CD4-positive, alpha-beta memory T cell (primary cell): ENCODE measurements at regions of chr9 and their contacts with region 1.

Region 1: GRCh38 chr9:72526901-72527800 is 5.7 kb downstream of the TMC1 start:
- DNase-seq: peak; percentile 74 to 93 (median 79)
- H3K4me3 ChIP-seq: peak overlapping the region; percentile 54 to 76
- H3K4me3 Mint-ChIP-seq: peak overlapping the region; percentile 81 to 94 (median 86)
- H3K27ac ChIP-seq: peak overlapping the region; percentile 68
- H3K27ac Mint-ChIP-seq: peak overlapping the region; percentile 92 to 98 (median 96)
- H3K4me1 ChIP-seq: peaks cover 27% of the 10 kb centered on the region
- H3K4me1 Mint-ChIP-seq: peaks cover 22 to 46% (median 34%) of the 10 kb centered on the region in 4 donors
- H3K27me3 ChIP-seq: no peaks in the 10 kb centered on the region
- H3K27me3 Mint-ChIP-seq: no peaks in the 10 kb centered on the region

Region 2: GRCh38 chr9:71911253-71912074 is 615.7 kb before region 1 on chr9 and contains the start of gene C9orf85:
- CTCF ChIA-PET with region 1: no interaction called
- POLR2A ChIA-PET with region 1: no interaction called
- intact Hi-C with region 1: loop called (anchors 10 kb)
- DNase-seq: peak; percentile 94 to 98 (median 96)
- H3K4me3 ChIP-seq: peak within 1 kb of the TSS; percentile 77 to 83
- H3K4me3 Mint-ChIP-seq: peak within 1 kb of the TSS; percentile 99 to 100 (median 100)
- H3K27ac ChIP-seq: peak within 1 kb of the TSS; percentile 74
- H3K27ac Mint-ChIP-seq: peak within 1 kb of the TSS; percentile 92 to 100 (median 97)
- H3K4me1 ChIP-seq: peaks cover 51% of the 10 kb centered on the region
- H3K4me1 Mint-ChIP-seq: peaks cover 46 to 76% (median 54%) of the 10 kb centered on the region in 4 donors
- H3K27me3 ChIP-seq: no peaks in the 10 kb centered on the region
- H3K27me3 Mint-ChIP-seq: no peaks in the 10 kb centered on the region
- total RNA-seq, gene C9orf85: 8.2 to 10.6 TPM

Region 3: GRCh38 chr9:72459308-72459707 is 67.8 kb before region 1 on chr9:
- CTCF ChIA-PET with region 1: no interaction called
- POLR2A ChIA-PET with region 1: interaction called, 11 read pairs
- intact Hi-C with region 1: no loop called
- DNase-seq: no peak
- H3K4me3 ChIP-seq: no peak overlapping the region
- H3K4me3 Mint-ChIP-seq: no peak overlapping the region
- H3K27ac ChIP-seq: no peak overlapping the region
- H3K27ac Mint-ChIP-seq: peak overlapping the region in 1 of 7 donors; percentile 55
- H3K4me1 ChIP-seq: peaks cover 17% of the 10 kb centered on the region
- H3K4me1 Mint-ChIP-seq: peaks cover 10 to 21% (median 18%) of the 10 kb centered on the region in 4 donors
- H3K27me3 ChIP-seq: no peaks in the 10 kb centered on the region
- H3K27me3 Mint-ChIP-seq: peaks cover 0 to 3% of the 10 kb centered on the region in 2 donors

Region 4: GRCh38 chr9:72485821-72486593 is 41.1 kb before region 1 on chr9:
- CTCF ChIA-PET with region 1: no interaction called
- POLR2A ChIA-PET with region 1: no interaction called
- intact Hi-C with region 1: no loop called
- DNase-seq: no peak
- H3K4me3 ChIP-seq: no peak overlapping the region
- H3K4me3 Mint-ChIP-seq: no peak overlapping the region
- H3K27ac ChIP-seq: no peak overlapping the region
- H3K27ac Mint-ChIP-seq: no peak overlapping the region
- H3K4me1 ChIP-seq: no peaks in the 10 kb centered on the region
- H3K4me1 Mint-ChIP-seq: no peaks in the 10 kb centered on the region
- H3K27me3 ChIP-seq: no peaks in the 10 kb centered on the region
- H3K27me3 Mint-ChIP-seq: peaks cover 1 to 4% of the 10 kb centered on the region in 2 donors

Region 5: DNA sequence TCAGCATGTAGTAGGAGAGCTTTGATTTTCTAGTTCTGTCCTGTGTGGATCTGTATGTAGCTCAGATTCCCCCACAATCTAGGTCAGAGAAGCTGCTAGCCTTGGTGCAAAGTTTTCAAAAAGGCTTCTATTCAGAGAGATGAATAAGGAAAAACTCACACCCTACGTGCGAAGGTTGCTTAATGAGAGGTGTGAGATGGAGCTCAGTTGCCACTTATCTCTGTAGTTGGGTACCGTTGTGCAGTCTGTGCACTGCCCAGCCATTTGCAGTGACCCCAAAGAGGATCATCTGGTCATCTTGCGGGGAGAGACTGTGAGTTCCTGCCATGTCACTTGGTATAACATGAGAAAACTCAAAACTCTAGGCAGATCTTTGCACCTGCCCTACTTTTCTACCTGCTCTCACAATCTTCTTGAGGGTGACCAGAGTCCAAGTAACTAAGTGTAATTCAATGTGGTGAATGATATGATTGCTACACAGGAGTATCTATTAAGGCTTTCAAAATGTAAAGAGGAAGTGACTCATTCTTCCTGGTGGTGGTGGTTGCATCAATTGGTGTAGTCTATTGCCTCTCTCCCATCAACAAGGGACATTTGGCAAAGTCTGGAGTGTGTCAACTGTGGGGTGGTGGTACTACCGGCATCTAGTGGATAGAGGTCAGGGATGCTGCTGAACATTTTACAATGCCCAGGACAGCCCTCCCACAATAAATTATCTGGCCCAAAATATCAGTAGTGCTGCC is 59.4 kb after region 1 on chr9:
- CTCF ChIA-PET with region 1: interaction called, 5 read pairs
- POLR2A ChIA-PET with region 1: interaction called, 4 read pairs
- intact Hi-C with region 1: loop called (anchors 1 kb)
- DNase-seq: peak; percentile 23 to 68 (median 29)
- H3K4me3 ChIP-seq: no peak overlapping the region
- H3K4me3 Mint-ChIP-seq: peak overlapping the region in 7 of 8 donors; percentile 6 to 65 (median 26)
- H3K27ac ChIP-seq: no peak overlapping the region
- H3K27ac Mint-ChIP-seq: peak overlapping the region; percentile 19 to 81 (median 73)
- H3K4me1 ChIP-seq: peaks cover 10% of the 10 kb centered on the region
- H3K4me1 Mint-ChIP-seq: peaks cover 15 to 27% (median 17%) of the 10 kb centered on the region in 4 donors
- H3K27me3 ChIP-seq: no peaks in the 10 kb centered on the region
- H3K27me3 Mint-ChIP-seq: no peaks in the 10 kb centered on the region

Region 6: GRCh38 chr9:73149371-73150067 is 622.4 kb after region 1 on chr9:
- CTCF ChIA-PET with region 1: no interaction called
- POLR2A ChIA-PET with region 1: interaction called, 3 read pairs
- intact Hi-C with region 1: loop called (anchors 5 kb)
- DNase-seq: peak in 4 of 5 donors; percentile 33 to 68 (median 50)
- H3K4me3 ChIP-seq: peak overlapping the region in 1 of 2 donors; percentile 17
- H3K4me3 Mint-ChIP-seq: peak overlapping the region; percentile 37 to 83 (median 78)
- H3K27ac ChIP-seq: peak overlapping the region; percentile 75
- H3K27ac Mint-ChIP-seq: peak overlapping the region; percentile 82 to 99 (median 95)
- H3K4me1 ChIP-seq: peaks cover 41% of the 10 kb centered on the region
- H3K4me1 Mint-ChIP-seq: peaks cover 24 to 51% (median 32%) of the 10 kb centered on the region in 4 donors
- H3K27me3 ChIP-seq: no peaks in the 10 kb centered on the region
- H3K27me3 Mint-ChIP-seq: no peaks in the 10 kb centered on the region